Breast epithelium (tissue), 4 donors: ENCODE measurements at regions of chr2 and their contacts with region 1.

Region 1: DNA sequence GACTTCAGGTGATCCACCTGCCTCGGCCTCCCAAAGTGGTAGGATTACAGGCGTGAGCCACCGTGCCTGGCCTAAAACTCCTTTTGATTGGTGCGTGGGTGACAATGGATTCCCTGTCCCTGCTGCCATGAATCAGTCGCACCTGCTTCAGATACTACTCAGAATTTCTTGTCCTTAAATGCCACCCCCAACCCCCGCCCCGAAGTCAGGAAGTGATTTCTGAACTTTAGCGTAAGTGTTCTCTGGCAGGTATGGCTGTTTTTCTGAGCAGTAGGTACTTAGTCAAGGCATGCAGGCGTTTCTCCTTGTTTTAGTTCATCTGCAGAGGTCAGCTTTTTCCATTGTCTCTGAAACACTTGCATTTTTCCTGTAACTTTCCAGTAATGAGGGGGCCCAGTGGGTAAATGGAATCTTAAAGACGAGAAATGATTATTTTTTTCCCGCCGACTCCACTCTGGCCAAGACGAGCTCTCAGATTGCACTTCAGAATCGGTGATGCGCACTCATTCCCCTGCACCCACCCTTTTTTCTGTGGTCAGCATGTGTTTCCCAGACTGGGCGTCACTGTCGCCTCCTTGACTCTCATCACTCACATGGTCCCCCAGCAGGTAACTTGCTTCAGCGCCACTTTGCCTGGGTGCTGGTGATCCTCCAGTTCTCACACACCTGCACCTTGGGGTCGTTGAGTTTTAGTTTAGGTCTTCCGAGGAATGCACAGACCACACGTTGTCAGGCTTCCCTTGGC is 179.7 kb downstream of the GBX2 start:
- DNase-seq: no peak
- H3K4me3 ChIP-seq: no peak overlapping the region
- H3K27ac ChIP-seq: no peak overlapping the region
- H3K4me1 ChIP-seq: no peaks in the 10 kb centered on the region
- H3K27me3 ChIP-seq: no peaks in the 10 kb centered on the region
- CTCF ChIP-seq: no peak
- POLR2A ChIP-seq: no peak

Region 2: DNA sequence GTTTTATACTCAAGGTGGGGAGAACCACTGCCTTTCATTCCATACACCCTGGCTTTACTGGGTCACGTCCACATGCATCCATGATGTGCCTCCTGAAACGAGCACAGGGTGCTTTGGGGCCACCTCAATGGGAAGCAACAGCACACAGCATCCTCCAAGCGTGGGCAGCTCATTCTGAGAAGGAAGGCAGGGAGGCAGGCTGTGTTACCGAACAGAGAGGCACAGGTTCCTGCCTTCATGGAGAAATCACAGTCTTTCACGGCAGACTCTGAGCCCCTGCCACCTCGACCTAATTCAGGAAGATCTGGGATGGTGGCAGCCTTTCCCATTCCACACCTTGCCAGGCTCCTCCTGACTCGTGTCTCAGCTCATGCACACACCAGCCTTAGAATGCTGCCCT is 49.7 kb after region 1 on chr2:
- intact Hi-C with region 1: loop called (anchors 1 kb)
- DNase-seq: no peak
- H3K4me3 ChIP-seq: no peak overlapping the region
- H3K27ac ChIP-seq: no peak overlapping the region
- H3K4me1 ChIP-seq: no peaks in the 10 kb centered on the region
- H3K27me3 ChIP-seq: no peaks in the 10 kb centered on the region
- CTCF ChIP-seq: no peak
- POLR2A ChIP-seq: no peak